K562 (cell line): ENCODE measurements at regions of chr3 and their contacts with region 1.

Region 1: DNA sequence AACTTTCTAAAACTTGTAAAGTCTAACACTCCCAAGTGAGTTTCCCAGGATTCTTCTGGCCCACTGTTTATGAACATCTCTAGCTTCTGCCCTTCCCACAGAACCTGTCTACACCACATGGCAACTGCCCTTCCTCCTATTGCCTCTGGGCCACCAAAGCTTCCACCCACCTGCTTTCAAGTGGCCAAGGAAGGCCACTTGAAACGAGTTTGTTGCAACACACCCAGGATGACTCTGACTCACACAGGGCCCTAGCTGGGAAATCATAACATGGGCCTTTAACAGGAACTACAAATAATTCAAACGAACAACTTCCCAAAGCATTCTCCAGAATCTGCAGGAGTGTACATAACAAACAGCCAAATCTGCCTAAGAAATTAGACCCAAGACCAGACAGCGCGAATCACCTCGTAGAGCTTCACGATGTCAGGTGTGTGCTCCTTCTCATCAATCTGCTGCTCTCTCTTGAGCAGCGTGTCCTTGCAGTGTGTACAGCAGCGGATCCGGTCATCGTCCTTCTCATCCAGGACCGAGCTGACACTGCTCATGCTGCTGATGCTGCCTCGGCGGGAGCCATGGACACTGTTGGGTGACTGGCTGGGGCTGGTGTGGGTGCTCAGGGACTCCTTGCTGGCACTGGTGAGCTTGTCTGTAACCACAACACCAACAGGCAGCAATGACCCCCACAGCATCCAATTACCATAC is 16.8 kb downstream of the RBSN start:
- DNase-seq: no peak
- ATAC-seq: no peak
- H3K4me3 ChIP-seq: no peak overlapping the region
- H3K27ac ChIP-seq: no peak overlapping the region
- H3K4me1 ChIP-seq: no peaks in the 10 kb centered on the region
- H3K27me3 ChIP-seq: no peaks in the 10 kb centered on the region
- CTCF ChIP-seq: no peak
- EP300 ChIP-seq: no peak
- POLR2A ChIP-seq: no peak
- RAD21 ChIP-seq: no peak

Region 2: GRCh38 chr3:14822670-14823390 is 259.3 kb before region 1 on chr3:
- CTCF ChIA-PET with region 1: no interaction called
- POLR2A ChIA-PET with region 1: no interaction called
- in situ Hi-C with region 1: no loop called
- intact Hi-C with region 1: no loop called
- DNase-seq: no peak
- ATAC-seq: no peak; the same call in 1 of the 3 replicates
- H3K4me3 ChIP-seq: no peak overlapping the region
- H3K27ac ChIP-seq: no peak overlapping the region
- H3K4me1 ChIP-seq: peaks cover 0 to 4% of the 10 kb centered on the region in 2 experiments; a peak in 1 of 5 replicates
- H3K27me3 ChIP-seq: peaks cover 82 to 83% of the 10 kb centered on the region in 2 experiments
- CTCF ChIP-seq: no peak
- EP300 ChIP-seq: no peak
- POLR2A ChIP-seq: no peak
- RAD21 ChIP-seq: no peak

Region 3: GRCh38 chr3:15011174-15011573 is 70.9 kb before region 1 on chr3:
- CTCF ChIA-PET with region 1: no interaction called
- POLR2A ChIA-PET with region 1: no interaction called
- in situ Hi-C with region 1: no loop called
- intact Hi-C with region 1: no loop called
- DNase-seq: peak in 2 of 4 experiments; percentile 35 to 45
- ATAC-seq: peak; percentile 70
- H3K4me3 ChIP-seq: no peak overlapping the region
- H3K27ac ChIP-seq: peak overlapping the region; percentile 36; the same call in 1 of the 3 replicates
- H3K4me1 ChIP-seq: peaks cover 0 to 15% of the 10 kb centered on the region in 2 experiments; a peak in 4 of 5 replicates
- H3K27me3 ChIP-seq: no peaks in the 10 kb centered on the region
- CTCF ChIP-seq: no peak
- EP300 ChIP-seq: no peak
- POLR2A ChIP-seq: no peak
- RAD21 ChIP-seq: no peak; a peak in 1 of 4 replicates

Region 4: GRCh38 chr3:15092686-15093085 is 10.6 kb after region 1 on chr3:
- CTCF ChIA-PET with region 1: no interaction called
- POLR2A ChIA-PET with region 1: interaction called, 24 read pairs
- in situ Hi-C with region 1: no loop called
- intact Hi-C with region 1: no loop called
- DNase-seq: no peak
- ATAC-seq: no peak; the same call in 2 of the 3 replicates
- H3K4me3 ChIP-seq: no peak overlapping the region
- H3K27ac ChIP-seq: no peak overlapping the region
- H3K4me1 ChIP-seq: peaks cover 2% of the 10 kb centered on the region in 2 experiments; a peak in 4 of 5 replicates
- H3K27me3 ChIP-seq: no peaks in the 10 kb centered on the region
- CTCF ChIP-seq: no peak
- EP300 ChIP-seq: no peak
- POLR2A ChIP-seq: no peak
- RAD21 ChIP-seq: no peak

Region 5: GRCh38 chr3:15205934-15206661 is 124.0 kb after region 1 on chr3 and contains the start of gene CAPN7:
- CTCF ChIA-PET with region 1: no interaction called
- POLR2A ChIA-PET with region 1: no interaction called
- in situ Hi-C with region 1: no loop called
- intact Hi-C with region 1: no loop called
- DNase-seq: peak; percentile 97 to 98 (median 98)
- ATAC-seq: peak; percentile 95
- H3K4me3 ChIP-seq: peak within 1 kb of the TSS; percentile 90
- H3K27ac ChIP-seq: peak within 1 kb of the TSS; percentile 89
- H3K4me1 ChIP-seq: peaks cover 14% of the 10 kb centered on the region in 2 experiments; a peak in 3 of 5 replicates
- H3K27me3 ChIP-seq: no peaks in the 10 kb centered on the region
- CTCF ChIP-seq: peak; percentile 41 to 52 (median 45); a peak in 5 of 6 replicates
- EP300 ChIP-seq: no peak
- POLR2A ChIP-seq: peak; percentile 84
- RAD21 ChIP-seq: peak in 1 of 2 experiments; percentile 31; a peak in 1 of 4 replicates
- polyA plus RNA-seq, gene CAPN7: 6.5 to 10.0 TPM

Region 6: DNA sequence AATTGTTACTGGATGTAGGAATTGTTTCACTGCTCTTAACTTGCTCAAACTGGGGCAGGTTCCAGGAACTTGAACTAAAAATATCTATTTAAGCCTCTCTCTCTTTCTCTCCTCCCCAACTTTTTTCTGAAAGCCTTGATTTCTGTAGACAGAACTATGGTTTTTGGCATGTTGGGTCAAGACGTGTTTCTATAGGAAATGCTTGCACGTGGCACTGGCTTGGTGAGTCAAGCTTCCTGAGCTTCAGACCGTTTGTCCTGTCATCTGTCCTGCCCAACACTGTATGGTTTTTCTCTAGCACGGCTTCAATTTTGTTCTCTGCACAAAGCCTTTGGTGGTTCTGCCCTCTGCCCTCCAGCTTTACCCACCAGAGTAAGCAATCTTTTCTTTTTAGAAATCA is 358.8 kb after region 1 on chr3:
- CTCF ChIA-PET with region 1: no interaction called
- POLR2A ChIA-PET with region 1: no interaction called
- in situ Hi-C with region 1: no loop called
- intact Hi-C with region 1: no loop called
- DNase-seq: no peak
- ATAC-seq: no peak
- H3K4me3 ChIP-seq: no peak overlapping the region
- H3K27ac ChIP-seq: no peak overlapping the region
- H3K4me1 ChIP-seq: no peaks in the 10 kb centered on the region
- H3K27me3 ChIP-seq: no peaks in the 10 kb centered on the region
- CTCF ChIP-seq: no peak
- EP300 ChIP-seq: no peak
- POLR2A ChIP-seq: no peak
- RAD21 ChIP-seq: no peak